Right ventricle myocardium inferior (tissue), 1 donor: ENCODE measurements at regions of chr18 and their contacts with region 1.

Region 1: GRCh38 chr18:5890331-5891183 is 4.8 kb downstream of the TMEM200C start:
- DNase-seq: no peak
- ATAC-seq: peak; percentile 84

Region 2: DNA sequence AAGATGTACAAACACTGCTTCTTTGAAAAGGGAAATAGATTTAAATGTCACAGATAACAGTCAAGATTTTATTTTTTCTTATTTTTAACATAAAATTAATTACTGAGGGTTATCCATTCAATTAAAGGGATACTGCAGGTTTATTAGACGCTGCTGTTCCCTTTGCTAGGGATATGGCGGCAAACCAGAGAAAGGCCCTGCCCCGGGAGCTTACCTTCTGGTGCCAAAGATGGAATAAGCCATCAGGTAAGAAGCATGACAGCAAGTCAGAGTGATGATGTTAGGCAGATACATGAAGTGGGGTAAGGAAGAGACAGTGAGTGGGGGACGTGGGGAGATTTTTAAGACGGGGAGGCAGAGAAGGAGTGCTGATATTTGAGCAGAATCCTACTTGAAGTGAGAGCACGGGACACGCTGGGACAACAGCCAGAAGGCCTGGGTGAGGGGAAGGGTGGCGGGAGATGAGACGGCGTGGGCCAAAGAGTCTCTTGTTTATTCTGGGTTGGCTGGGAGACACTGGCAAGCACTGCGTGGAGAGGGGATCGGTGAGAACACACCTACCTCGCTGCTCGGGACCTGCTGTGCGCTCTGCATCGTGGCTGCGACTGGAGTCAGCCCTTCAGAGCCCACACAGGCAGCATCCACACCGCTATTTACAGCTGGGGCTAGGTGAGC is 255.2 kb after region 1 on chr18:
- intact Hi-C with region 1: loop called (anchors 10 kb)
- DNase-seq: peak; percentile 79
- ATAC-seq: peak; percentile 96